ENCODE measurements at regions of chr10 and their contacts with region 1.

Region 1: DNA sequence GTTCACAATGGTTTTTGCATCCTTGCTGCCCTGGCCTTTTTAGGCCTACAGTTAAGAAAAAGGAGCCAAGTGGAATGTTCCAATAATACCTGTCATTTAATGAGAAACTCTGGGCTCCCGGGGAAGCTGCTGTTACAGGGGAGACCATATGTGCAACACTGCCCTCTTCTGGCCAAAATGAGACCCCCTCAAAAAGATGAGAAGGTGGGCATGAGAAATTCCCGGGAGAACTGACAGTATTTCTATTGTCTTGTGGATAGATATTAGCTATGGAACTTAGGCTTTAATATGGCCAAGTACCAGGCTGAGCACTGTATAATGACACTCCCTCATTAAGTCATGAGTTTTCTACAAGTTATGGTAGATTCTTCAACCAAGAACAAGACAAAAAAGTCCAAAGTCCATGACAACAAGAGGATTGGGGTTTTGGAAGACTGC is 99.4 kb downstream of the CCDC3 start:
- DNase-seq: peak; percentile 63
- H3K4me3 Mint-ChIP-seq: no peak overlapping the region
- H3K27ac Mint-ChIP-seq: no peak overlapping the region
- H3K4me1 Mint-ChIP-seq: no peaks in the 10 kb centered on the region
- H3K27me3 Mint-ChIP-seq: peaks cover 8% of the 10 kb centered on the region

Region 2: GRCh38 chr10:12264204-12264940 is 637.8 kb before region 1 on chr10:
- CTCF ChIA-PET with region 1: interaction called, 12 read pairs
- DNase-seq: peak; percentile 75
- H3K4me3 Mint-ChIP-seq: peak overlapping the region; percentile 29
- H3K27ac Mint-ChIP-seq: no peak overlapping the region
- H3K4me1 Mint-ChIP-seq: peaks cover 24% of the 10 kb centered on the region
- H3K27me3 Mint-ChIP-seq: peaks cover 5% of the 10 kb centered on the region

Region 3: DNA sequence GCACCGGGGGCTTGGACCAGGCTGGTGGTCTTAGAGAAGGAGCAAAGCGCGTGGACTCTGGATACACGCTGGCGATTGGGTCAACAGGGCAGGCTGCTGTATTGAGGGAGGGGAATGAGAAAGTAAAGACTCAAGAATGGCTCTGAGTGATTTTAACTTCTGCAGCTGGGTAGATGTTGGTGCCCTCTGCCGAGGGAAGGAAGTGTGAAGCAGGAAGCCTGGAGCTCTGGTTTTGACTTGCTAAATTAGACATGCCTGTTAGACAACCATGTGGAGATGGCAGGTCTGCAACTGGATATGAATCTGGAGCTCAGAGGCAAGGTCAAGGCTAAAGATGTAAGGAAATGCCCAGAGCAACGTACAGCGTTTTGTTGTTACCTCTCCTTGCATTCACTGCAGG is 17.8 kb before region 1 on chr10:
- CTCF ChIA-PET with region 1: interaction called, 11 read pairs
- DNase-seq: no peak
- H3K4me3 Mint-ChIP-seq: no peak overlapping the region
- H3K27ac Mint-ChIP-seq: no peak overlapping the region
- H3K4me1 Mint-ChIP-seq: no peaks in the 10 kb centered on the region
- H3K27me3 Mint-ChIP-seq: peaks cover 19% of the 10 kb centered on the region

Region 4: DNA sequence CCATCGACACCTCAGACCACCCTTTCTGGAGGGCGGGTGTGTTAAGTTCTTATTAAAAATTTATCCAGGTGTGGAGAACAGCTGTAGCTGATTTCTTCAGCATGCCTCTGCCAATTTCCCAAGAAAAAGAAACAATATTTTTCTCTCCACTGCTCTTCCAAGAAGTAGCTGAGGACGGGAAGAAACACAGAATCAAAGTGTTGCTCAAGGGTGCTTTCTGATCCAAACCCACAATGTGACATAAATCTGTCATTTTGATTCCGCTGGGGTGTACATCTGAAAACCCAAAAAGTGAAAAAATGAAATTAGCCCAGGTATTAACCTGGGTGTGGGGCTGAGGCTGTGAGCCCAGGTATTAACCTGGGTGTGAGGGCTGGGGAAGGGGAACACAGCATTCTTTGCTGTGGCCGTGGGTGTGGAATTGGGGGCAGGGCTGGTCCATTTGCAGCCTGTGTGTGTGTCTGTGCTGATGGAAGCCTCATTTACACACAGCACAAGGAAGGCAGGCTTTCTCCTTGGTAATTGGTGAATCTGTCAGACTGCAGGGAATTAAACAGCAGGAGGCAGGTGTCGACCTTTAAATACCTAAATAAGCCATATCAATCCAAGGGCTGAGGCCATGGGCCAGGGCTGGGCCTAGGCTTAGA is 147.7 kb after region 1 on chr10:
- CTCF ChIA-PET with region 1: no interaction called
- DNase-seq: no peak
- H3K4me3 Mint-ChIP-seq: no peak overlapping the region
- H3K27ac Mint-ChIP-seq: no peak overlapping the region
- H3K4me1 Mint-ChIP-seq: no peaks in the 10 kb centered on the region
- H3K27me3 Mint-ChIP-seq: peaks cover 13% of the 10 kb centered on the region

Region 5: DNA sequence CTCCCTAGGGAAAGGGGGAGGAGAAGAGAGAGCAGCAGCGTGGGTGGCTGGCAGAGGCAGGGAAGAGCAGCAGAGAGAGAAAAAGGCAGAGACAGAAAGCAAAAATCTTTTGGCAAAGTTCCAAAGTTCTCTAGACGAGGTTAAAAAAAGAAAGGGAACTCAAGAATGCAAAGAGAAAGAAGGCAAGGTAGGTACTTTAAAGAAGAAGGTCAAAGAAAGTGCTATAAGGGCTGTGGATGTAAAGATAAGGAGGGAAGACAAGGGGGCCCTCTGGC is 177.6 kb after region 1 on chr10:
- CTCF ChIA-PET with region 1: no interaction called
- DNase-seq: no peak
- H3K4me3 Mint-ChIP-seq: no peak overlapping the region
- H3K27ac Mint-ChIP-seq: no peak overlapping the region
- H3K4me1 Mint-ChIP-seq: no peaks in the 10 kb centered on the region
- H3K27me3 Mint-ChIP-seq: peaks cover 14% of the 10 kb centered on the region

Measured in activated naive CD4-positive, alpha-beta T cell treated with anti-CD3 and anti-CD28 coated beads, Interleukin-2, amount 10 ng/mL, durations not matched to agents 7 days and 5 days (primary cell).